ENCODE measurements at regions of chr2 and their contacts with region 1.

Region 1: DNA sequence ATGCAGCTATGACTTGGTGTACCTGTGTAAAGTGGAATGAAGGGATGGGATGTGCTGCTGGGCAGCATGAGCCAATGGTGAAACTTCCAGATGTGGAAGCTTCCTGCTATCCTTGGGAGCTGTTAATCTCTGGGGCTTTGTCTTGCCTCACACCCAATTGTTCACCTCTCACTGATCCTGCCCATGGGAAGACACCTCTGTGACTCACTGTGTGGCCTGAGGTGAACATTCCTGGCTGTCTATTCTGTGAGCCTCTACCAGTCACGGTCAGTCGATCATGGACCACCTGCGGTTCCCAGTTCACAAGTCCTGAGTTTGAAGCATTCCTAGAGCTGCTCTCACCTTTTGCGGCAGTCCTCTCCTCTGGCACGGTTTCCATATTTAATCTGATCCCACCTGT is 12.1 kb downstream of the NEURL3 start:
- DNase-seq: peak; percentile 88 to 99
- H3K4me3 ChIP-seq: peak overlapping the region; percentile 2; the same call in 1 of the 2 replicates
- H3K27ac ChIP-seq: peak overlapping the region; percentile 71
- H3K4me1 ChIP-seq: peaks cover 18% of the 10 kb centered on the region
- H3K27me3 ChIP-seq: no peaks in the 10 kb centered on the region
- CTCF ChIP-seq: no peak

Region 2: GRCh38 chr2:96320728-96321622 is 172.1 kb before region 1 on chr2:
- CTCF ChIA-PET with region 1: no interaction called
- POLR2A ChIA-PET with region 1: interaction called, 12 read pairs
- intact Hi-C with region 1: no loop called
- DNase-seq: peak in 1 of 2 experiments; percentile 53
- H3K4me3 ChIP-seq: peak overlapping the region; percentile 66
- H3K27ac ChIP-seq: no peak overlapping the region
- H3K4me1 ChIP-seq: peaks cover 24% of the 10 kb centered on the region
- H3K27me3 ChIP-seq: peaks cover 15% of the 10 kb centered on the region
- CTCF ChIP-seq: no peak

Region 3: DNA sequence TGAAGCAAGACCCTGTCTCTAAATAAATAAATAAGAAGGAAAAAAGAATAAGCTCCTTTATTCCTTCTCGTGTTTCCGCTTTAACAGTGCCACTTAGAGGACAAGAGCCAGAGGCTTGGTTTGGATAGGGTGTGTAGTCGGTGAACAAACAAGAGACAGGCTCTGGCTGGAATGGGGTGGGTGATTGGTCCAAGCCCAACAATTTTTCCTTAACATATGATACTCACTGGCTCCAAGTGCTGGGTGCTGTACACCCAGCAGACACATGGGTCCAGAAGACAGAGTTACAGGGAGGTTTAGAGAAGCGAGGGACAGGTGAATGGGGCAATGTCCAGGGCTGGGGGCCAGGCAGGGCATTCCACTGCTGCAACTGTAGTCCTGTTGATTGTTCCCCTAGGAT is 79.7 kb before region 1 on chr2:
- CTCF ChIA-PET with region 1: interaction called, 7 read pairs
- POLR2A ChIA-PET with region 1: no interaction called
- intact Hi-C with region 1: loop called (anchors 2 kb)
- DNase-seq: peak in 1 of 2 experiments; percentile 26
- H3K4me3 ChIP-seq: no peak overlapping the region
- H3K27ac ChIP-seq: no peak overlapping the region
- H3K4me1 ChIP-seq: peaks cover 48% of the 10 kb centered on the region
- H3K27me3 ChIP-seq: no peaks in the 10 kb centered on the region
- CTCF ChIP-seq: no peak

Region 4: GRCh38 chr2:96427917-96428316 is 65.2 kb before region 1 on chr2:
- CTCF ChIA-PET with region 1: no interaction called
- POLR2A ChIA-PET with region 1: no interaction called
- intact Hi-C with region 1: loop called (anchors 1 kb)
- DNase-seq: peak; percentile 96 to 100
- H3K4me3 ChIP-seq: no peak overlapping the region
- H3K27ac ChIP-seq: peak overlapping the region; percentile 82
- H3K4me1 ChIP-seq: peaks cover 32% of the 10 kb centered on the region
- H3K27me3 ChIP-seq: no peaks in the 10 kb centered on the region
- CTCF ChIP-seq: no peak

Region 5: GRCh38 chr2:96449637-96450036 is 43.4 kb before region 1 on chr2:
- CTCF ChIA-PET with region 1: interaction called, 4 read pairs
- POLR2A ChIA-PET with region 1: no interaction called
- intact Hi-C with region 1: loop called (anchors 5 kb)
- DNase-seq: peak; percentile 60 to 69
- H3K4me3 ChIP-seq: no peak overlapping the region
- H3K27ac ChIP-seq: no peak overlapping the region
- H3K4me1 ChIP-seq: peaks cover 13% of the 10 kb centered on the region
- H3K27me3 ChIP-seq: no peaks in the 10 kb centered on the region
- CTCF ChIP-seq: no peak

Region 6: DNA sequence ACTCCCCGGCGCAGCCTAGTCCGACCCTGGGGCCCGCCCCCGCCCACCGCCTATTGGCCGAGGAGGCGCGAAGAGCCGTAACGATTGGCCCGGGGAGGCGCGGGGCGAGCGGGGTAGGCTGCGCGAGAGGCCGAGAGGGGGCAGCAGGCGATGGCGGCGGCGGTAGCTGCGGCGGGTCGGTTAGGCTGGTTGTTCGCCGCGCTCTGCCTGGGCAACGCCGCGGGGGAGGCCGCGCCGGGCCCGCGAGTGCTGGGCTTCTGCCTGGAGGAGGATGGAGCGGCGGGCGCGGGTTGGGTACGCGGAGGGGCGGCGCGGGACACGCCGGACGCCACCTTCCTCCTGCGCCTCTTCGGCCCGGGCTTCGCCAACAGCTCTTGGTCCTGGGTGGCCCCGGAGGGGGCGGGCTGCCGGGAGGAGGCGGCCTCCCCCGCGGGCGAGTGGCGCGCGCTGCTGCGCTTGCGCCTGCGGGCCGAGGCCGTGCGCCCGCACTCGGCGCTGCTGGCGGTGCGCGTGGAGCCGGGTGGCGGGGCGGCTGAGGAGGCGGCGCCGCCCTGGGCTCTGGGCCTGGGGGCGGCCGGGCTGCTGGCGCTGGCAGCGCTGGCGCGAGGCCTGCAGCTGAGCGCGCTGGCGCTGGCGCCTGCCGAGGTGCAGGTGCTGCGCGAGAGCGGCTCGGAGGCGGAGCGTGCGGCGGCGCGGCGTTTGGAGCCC is 323.2 kb after region 1 on chr2 and contains the start of gene CNNM3:
- CTCF ChIA-PET with region 1: no interaction called
- POLR2A ChIA-PET with region 1: interaction called, 21 read pairs
- intact Hi-C with region 1: no loop called
- DNase-seq: peak; percentile 87 to 99
- H3K4me3 ChIP-seq: peak within 1 kb of the TSS; percentile 87
- H3K27ac ChIP-seq: peak within 1 kb of the TSS; percentile 7; the same call in 1 of the 2 replicates
- H3K4me1 ChIP-seq: peaks cover 26% of the 10 kb centered on the region
- H3K27me3 ChIP-seq: no peaks in the 10 kb centered on the region
- CTCF ChIP-seq: peak; percentile 74
- total RNA-seq, gene CNNM3: 28.7 and 28.8 TPM in 2 replicates

Measured in PC-9 (cell line).